Mucosa of descending colon (tissue), 3 donors: ENCODE measurements at regions of chr2 and their contacts with region 1.

Region 1: DNA sequence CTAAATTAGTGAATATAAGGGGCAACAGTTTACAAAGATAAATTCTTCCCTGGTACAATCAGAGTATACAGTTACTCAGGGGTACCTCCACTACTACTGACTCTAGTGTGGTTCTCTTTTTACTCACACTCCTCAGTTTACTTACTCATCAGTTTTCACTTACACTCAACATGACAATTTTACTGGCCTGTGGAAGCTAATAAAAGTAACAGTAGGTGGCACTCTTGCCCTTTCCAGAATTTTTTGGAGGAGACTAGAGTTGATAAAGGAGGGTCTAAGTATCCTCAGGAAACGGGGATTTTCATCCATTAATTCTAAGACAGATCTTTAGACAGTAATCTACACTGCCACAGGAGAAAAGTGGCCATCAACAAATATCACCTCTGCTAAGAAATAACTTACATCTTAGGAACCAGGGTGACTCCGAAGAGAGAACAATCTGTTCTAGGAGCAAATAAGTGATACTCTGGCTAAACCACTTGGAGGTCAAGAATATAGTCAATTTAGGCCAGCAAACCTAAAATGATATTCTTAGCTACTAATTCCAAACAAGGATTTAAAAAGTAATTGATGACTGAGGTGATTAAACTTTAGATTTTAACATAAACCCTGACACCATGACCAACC is 61.3 kb downstream of the ATL2 start:
- DNase-seq: peak in 1 of 3 donors; percentile 55
- ATAC-seq: peak; percentile 48
- H3K4me3 ChIP-seq: no peak overlapping the region
- H3K4me1 ChIP-seq: no peaks in the 10 kb centered on the region
- CTCF ChIP-seq: peak; percentile 43

Region 2: GRCh38 chr2:38508311-38509039 is 192.7 kb after region 1 on chr2:
- intact Hi-C with region 1: loop called in 1 of 2 experiments (anchors 5 kb)
- DNase-seq: peak; percentile 65 to 96 (median 79)
- ATAC-seq: peak; percentile 92
- H3K4me3 ChIP-seq: no peak overlapping the region
- H3K4me1 ChIP-seq: no peaks in the 10 kb centered on the region
- CTCF ChIP-seq: peak; percentile 18